BJ (cell line): ENCODE measurements at regions of chr7 and their contacts with region 1.

Region 1: GRCh38 chr7:100444311-100445278 is 8.3 kb upstream of the PPP1R35 start:
- DNase-seq: no peak
- H3K4me3 ChIP-seq: no peak overlapping the region
- H3K27me3 ChIP-seq: no peaks in the 10 kb centered on the region
- CTCF ChIP-seq: no peak

Region 2: GRCh38 chr7:100148559-100149350 is 295.8 kb before region 1 on chr7 and contains the start of gene LAMTOR4:
- CTCF ChIA-PET with region 1: no interaction called
- POLR2A ChIA-PET with region 1: interaction called, 10 read pairs
- DNase-seq: peak; percentile 98
- H3K4me3 ChIP-seq: peak within 1 kb of the TSS; percentile 67
- H3K27me3 ChIP-seq: no peaks in the 10 kb centered on the region
- CTCF ChIP-seq: no peak
- polyA plus RNA-seq, gene LAMTOR4: 125 and 193 TPM in 2 replicates